Activated T-helper 2 cell treated with anti-CD3 and anti-CD28 coated beads, Interferon-gamma antibody, Interleukin-2, Interleukin-4, amounts not matched to agents 10 μg/mL and 5 μg/mL and 100 μg/mL, durations not matched to agents 14 hours and 24 hours and 36 hours (primary cell): ENCODE measurements at regions of chr9 and their contacts with region 1.

Region 1: GRCh38 chr9:133485361-133486260 is 6.7 kb upstream of the SLC2A6 start:
- DNase-seq: no peak
- H3K4me3 Mint-ChIP-seq: peak overlapping the region; percentile 21
- H3K27ac Mint-ChIP-seq: no peak overlapping the region
- H3K4me1 Mint-ChIP-seq: peaks cover 2% of the 10 kb centered on the region
- H3K27me3 Mint-ChIP-seq: peaks cover 5% of the 10 kb centered on the region

Region 2: GRCh38 chr9:133170716-133171559 is 314.7 kb before region 1 on chr9:
- intact Hi-C with region 1: no loop called
- DNase-seq: no peak
- H3K4me3 Mint-ChIP-seq: no peak overlapping the region
- H3K27ac Mint-ChIP-seq: no peak overlapping the region
- H3K4me1 Mint-ChIP-seq: no peaks in the 10 kb centered on the region
- H3K27me3 Mint-ChIP-seq: peaks cover 13% of the 10 kb centered on the region

Region 3: GRCh38 chr9:133184962-133185361 is 300.6 kb before region 1 on chr9:
- intact Hi-C with region 1: loop called (anchors 1 kb)
- DNase-seq: peak; percentile 36
- H3K4me3 Mint-ChIP-seq: no peak overlapping the region
- H3K27ac Mint-ChIP-seq: no peak overlapping the region
- H3K4me1 Mint-ChIP-seq: peaks cover 27% of the 10 kb centered on the region
- H3K27me3 Mint-ChIP-seq: peaks cover 33% of the 10 kb centered on the region

Region 4: GRCh38 chr9:133356391-133357091 is 129.1 kb before region 1 on chr9 and contains the starts of genes SURF1 and SURF2:
- intact Hi-C with region 1: loop called (anchors 5 kb)
- DNase-seq: peak; percentile 88
- H3K4me3 Mint-ChIP-seq: peak within 1 kb of the TSS; percentile 88
- H3K27ac Mint-ChIP-seq: peak within 1 kb of the TSS; percentile 74
- H3K4me1 Mint-ChIP-seq: peaks cover 41% of the 10 kb centered on the region
- H3K27me3 Mint-ChIP-seq: no peaks in the 10 kb centered on the region
- total RNA-seq, gene SURF1: 32.4 and 33.0 TPM in 2 replicates
- total RNA-seq, gene SURF2: 16.9 and 22.1 TPM in 2 replicates

Region 5: DNA sequence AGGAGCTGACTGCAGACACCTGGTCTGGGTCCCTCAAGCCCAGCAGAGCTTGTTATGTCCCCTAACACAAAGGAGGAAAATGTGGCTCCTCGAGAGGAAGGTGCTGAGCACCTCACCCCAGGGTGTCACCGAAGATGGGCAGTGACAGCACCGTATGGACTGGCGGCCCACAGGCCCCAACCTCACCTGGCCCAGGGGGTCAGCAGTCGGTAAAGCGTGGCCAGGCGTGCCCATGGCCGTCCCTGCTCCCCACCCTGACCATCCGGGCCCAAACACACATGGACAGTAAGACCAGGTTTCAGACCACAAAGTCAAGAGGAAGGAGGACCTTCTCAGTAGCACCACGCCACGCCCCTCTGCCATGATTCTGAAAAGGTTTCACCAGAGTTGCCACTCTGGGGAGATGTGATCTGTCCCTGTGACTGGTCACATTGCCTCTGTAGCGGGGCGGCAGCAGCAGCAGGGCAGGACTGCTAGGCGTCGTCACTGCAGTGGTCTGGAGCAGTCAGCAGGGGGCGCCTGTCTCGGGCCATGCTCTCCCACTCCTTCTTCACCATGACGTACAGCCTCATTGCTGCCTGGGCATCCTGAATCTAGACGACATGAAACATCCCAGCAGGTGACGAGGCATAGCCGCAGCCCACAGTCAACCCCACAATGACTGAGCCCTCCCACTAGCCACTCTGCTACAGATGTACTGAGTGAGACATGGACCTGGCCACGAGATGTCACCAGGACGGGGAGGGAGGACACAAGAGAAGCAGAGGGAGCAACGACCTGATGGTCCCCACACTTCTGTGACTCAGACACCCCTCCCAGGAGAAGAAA is 78.9 kb before region 1 on chr9:
- intact Hi-C with region 1: loop called (anchors 1 kb)
- DNase-seq: peak; percentile 70
- H3K4me3 Mint-ChIP-seq: no peak overlapping the region
- H3K27ac Mint-ChIP-seq: peak overlapping the region; percentile 68
- H3K4me1 Mint-ChIP-seq: peaks cover 8% of the 10 kb centered on the region
- H3K27me3 Mint-ChIP-seq: no peaks in the 10 kb centered on the region